Panc1 (cell line): ENCODE measurements at regions of chr3 and their contacts with region 1.

Region 1: GRCh38 chr3:184711493-184712247 is at the start of gene MAGEF1:
- DNase-seq: no peak
- ATAC-seq: peak; percentile 99
- H3K4me3 ChIP-seq: peak within 1 kb of the TSS; percentile 90 to 92
- H3K27ac ChIP-seq: peak within 1 kb of the TSS; percentile 92
- H3K4me1 ChIP-seq: peaks cover 9% of the 10 kb centered on the region
- H3K27me3 ChIP-seq: no peaks in the 10 kb centered on the region
- CTCF ChIP-seq: no peak
- total RNA-seq, gene MAGEF1: 27.7 TPM

Region 2: GRCh38 chr3:184656829-184657681 is 54.6 kb before region 1 on chr3:
- CTCF ChIA-PET with region 1: interaction called, 15 read pairs
- POLR2A ChIA-PET with region 1: no interaction called
- in situ Hi-C with region 1: no loop called
- intact Hi-C with region 1: no loop called
- DNase-seq: no peak
- ATAC-seq: no peak
- H3K4me3 ChIP-seq: no peak overlapping the region
- H3K27ac ChIP-seq: no peak overlapping the region
- H3K4me1 ChIP-seq: no peaks in the 10 kb centered on the region; the same call in 1 of the 2 replicates
- H3K27me3 ChIP-seq: no peaks in the 10 kb centered on the region; the same call in 1 of the 2 replicates
- CTCF ChIP-seq: no peak

Region 3: DNA sequence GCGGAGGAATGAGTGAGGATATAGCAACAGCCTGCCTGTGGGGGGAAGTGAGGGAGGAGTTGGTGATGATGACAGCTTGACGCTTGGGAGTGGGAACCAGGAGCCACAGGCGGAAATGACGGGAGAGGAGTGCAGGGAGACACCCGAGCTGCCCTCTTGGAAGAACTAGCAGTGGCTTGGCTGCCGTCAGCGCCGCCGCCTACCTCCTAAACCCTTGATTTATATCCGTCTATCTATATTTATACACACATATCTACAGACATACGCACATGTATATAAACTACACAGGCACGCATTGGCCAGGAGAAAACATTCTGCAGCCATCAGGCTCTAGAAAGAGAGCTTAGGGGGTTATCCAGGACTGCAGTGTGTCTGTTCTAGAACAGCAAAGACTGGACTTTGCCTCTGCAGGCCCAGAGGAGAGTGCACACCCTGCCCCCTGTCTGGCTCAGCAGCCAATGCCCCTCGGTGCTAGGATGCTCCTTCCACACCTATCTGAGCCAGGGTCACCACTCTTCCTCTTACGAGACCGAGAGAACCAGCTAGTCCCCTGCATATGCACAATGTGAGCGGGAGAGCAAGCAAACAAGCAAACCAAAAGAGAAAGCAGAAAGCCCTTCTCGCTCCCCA is 45.5 kb after region 1 on chr3:
- CTCF ChIA-PET with region 1: no interaction called
- POLR2A ChIA-PET with region 1: no interaction called
- in situ Hi-C with region 1: no loop called
- intact Hi-C with region 1: no loop called
- DNase-seq: no peak
- ATAC-seq: 0 out of 2 replicates have a peak, but pooled peaks have one; percentile 49
- H3K4me3 ChIP-seq: no peak overlapping the region
- H3K27ac ChIP-seq: no peak overlapping the region
- H3K4me1 ChIP-seq: no peaks in the 10 kb centered on the region
- H3K27me3 ChIP-seq: no peaks in the 10 kb centered on the region
- CTCF ChIP-seq: no peak